ENCODE measurements at regions of chr1 and their contacts with region 1.

Region 1: GRCh38 chr1:47262787-47263413 is 30.9 kb upstream of the TAL1 start:
- DNase-seq: no peak
- ATAC-seq: peak; percentile 80
- H3K4me3 ChIP-seq: no peak overlapping the region
- H3K27ac ChIP-seq: no peak overlapping the region
- H3K4me1 ChIP-seq: no peaks in the 10 kb centered on the region
- H3K27me3 ChIP-seq: no peaks in the 10 kb centered on the region
- CTCF ChIP-seq: peak; percentile 65

Region 2: DNA sequence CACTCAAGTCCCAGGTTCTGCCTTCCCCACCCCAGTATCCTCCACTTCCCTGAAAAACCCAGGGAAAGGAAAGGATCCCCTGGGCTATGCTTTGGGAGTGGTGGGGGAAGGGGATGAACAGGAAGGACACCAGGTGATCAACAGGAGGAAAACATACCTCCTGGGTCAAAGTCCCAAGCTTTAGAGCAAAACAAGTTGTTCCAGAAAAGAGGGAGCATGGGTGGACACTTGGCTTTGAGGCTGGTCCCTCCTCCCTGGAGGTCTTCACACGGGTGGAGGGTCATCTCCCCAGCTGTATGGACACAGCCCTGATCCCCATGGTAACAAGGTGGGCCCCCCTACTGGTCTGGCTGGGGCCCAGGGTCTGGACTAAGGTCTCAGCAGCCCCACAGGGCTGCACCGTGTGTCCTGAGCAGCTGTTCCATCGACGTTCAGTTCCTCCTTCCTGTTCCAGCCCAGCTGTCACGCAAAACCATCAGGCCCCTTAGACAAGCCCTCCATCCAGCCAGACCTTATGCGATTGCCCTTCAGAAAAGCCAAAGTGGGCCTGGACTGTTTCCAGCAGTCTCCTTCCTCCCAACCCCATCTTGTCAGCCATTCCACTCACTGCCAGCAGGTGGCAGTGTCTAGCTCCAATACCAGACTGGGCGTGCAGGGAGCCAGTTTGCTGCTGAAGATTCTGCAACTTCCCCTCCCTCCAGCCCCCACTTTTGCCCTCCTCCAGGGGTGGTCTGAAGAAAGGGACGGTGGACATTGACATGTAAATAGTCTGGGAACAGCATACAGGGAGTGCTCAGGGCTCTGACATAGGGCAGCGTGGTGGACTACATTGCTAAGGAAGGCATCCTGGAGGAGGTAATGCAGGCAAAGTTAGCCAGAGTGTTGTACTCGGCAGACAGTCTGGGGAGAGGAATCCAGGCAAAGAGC is 70.2 kb before region 1 on chr1:
- intact Hi-C with region 1: loop called (anchors 10 kb)
- DNase-seq: peak; percentile 85
- ATAC-seq: peak; percentile 70
- H3K4me3 ChIP-seq: no peak overlapping the region
- H3K27ac ChIP-seq: peak overlapping the region; percentile 42
- H3K4me1 ChIP-seq: peaks cover 35% of the 10 kb centered on the region
- H3K27me3 ChIP-seq: no peaks in the 10 kb centered on the region
- CTCF ChIP-seq: peak; percentile 95

Region 3: DNA sequence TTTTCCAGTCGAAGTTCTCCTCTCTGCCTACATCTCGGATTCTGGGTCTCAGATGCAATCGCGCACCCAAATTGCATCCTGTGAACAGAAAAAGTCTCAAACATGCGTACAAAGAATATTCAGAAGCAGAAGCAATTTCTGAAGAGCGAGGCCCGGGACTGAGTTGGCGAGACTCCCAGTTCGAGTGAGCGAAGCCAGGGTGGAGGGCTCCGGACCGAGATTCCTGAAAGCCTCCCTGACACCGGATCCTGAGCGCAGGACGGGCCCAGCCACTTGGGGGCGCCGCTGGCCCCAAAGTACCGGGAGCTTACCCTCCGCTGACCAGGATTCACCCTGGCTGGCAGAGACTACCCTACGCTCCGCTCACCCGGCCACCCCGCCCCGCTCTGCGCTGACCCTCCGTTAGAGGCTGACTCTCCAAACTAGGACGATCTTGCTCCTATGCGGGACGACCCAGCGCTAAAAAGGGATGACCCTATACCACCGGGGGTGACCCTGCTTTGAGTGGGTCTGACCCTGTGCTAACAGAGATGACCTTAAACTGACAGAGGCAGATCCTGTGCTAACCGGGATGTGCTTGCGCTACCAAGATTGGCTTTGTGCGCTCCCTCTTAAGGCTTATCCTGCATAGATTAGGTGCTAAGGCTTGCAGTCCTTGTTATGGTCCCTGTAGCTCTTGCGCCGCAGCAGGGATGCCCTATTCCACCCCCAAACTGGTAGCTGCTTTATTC is 187.1 kb after region 1 on chr1:
- intact Hi-C with region 1: no loop called
- DNase-seq: peak; percentile 81
- ATAC-seq: peak; percentile 88
- H3K4me3 ChIP-seq: no peak overlapping the region
- H3K27ac ChIP-seq: no peak overlapping the region
- H3K4me1 ChIP-seq: peaks cover 7% of the 10 kb centered on the region
- H3K27me3 ChIP-seq: peaks cover 69% of the 10 kb centered on the region
- CTCF ChIP-seq: peak; percentile 51

Measured in upper lobe of right lung (tissue), 1 donor.